ENCODE measurements at regions of chr12 and their contacts with region 1.

Region 1: GRCh38 chr12:91355150-91356006 is 172.8 kb upstream of the DCN start:
- DNase-seq: peak; percentile 49 to 79 (median 68)
- H3K4me3 ChIP-seq: no peak overlapping the region
- H3K27ac ChIP-seq: no peak overlapping the region
- H3K27me3 ChIP-seq: no peaks in the 10 kb centered on the region
- CTCF ChIP-seq: peak; percentile 52 to 92 (median 81)

Region 2: GRCh38 chr12:90978117-90978770 is 377.1 kb before region 1 on chr12:
- intact Hi-C with region 1: loop called (anchors 5 to 10 kb)
- DNase-seq: no peak
- H3K4me3 ChIP-seq: no peak overlapping the region
- H3K27ac ChIP-seq: no peak overlapping the region
- H3K27me3 ChIP-seq: no peaks in the 10 kb centered on the region
- CTCF ChIP-seq: peak in 55 of 56 donors; percentile 39 to 78 (median 61)

Region 3: DNA sequence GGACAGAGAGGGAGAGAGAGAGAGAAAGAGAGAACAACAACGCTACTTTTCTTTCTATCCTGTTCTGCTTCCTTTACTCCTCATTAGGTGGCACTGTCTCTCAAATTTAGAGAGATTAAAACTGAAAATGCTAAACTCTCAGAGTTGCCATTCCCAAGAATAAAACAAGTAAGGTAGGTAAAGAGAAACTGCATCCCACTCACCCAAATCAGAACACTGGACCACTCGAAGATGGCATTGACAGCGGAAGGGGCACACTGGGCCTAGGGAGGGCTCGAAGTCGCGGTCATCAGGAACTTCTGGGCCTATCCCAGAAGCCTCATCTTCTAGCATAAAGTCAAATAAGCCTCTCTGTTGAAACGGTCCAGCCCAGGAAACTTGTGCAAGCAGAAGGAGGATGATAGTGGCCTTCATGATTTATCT is 177.2 kb before region 1 on chr12:
- intact Hi-C with region 1: loop called (anchors 10 kb)
- DNase-seq: no peak
- H3K4me3 ChIP-seq: peak overlapping the region in 41 of 59 donors; percentile 1 to 56 (median 30)
- H3K27ac ChIP-seq: peak overlapping the region in 36 of 59 donors; percentile 7 to 79 (median 40)
- H3K27me3 ChIP-seq: no peaks in the 10 kb centered on the region
- CTCF ChIP-seq: peak in 55 of 56 donors; percentile 15 to 72 (median 51)

Region 4: GRCh38 chr12:91577586-91578539 is 222.5 kb after region 1 on chr12:
- intact Hi-C with region 1: no loop called
- DNase-seq: no peak
- H3K4me3 ChIP-seq: peak overlapping the region in 53 of 59 donors; percentile 1 to 57 (median 31)
- H3K27ac ChIP-seq: peak overlapping the region in 55 of 59 donors; percentile 5 to 98 (median 72)
- H3K27me3 ChIP-seq: no peaks in the 10 kb centered on the region
- CTCF ChIP-seq: peak; percentile 44 to 90 (median 72)